Activated CD8-positive, alpha-beta memory T cell treated with anti-CD3 and anti-CD28 coated beads, Interleukin-2, amount 10 ng/mL, durations not matched to agents 7 days and 5 days (primary cell): ENCODE measurements at regions of chr9 and their contacts with region 1.

Region 1: GRCh38 chr9:89455356-89455824 is 42.5 kb downstream of the SEMA4D start:
- DNase-seq: peak; percentile 68
- ATAC-seq: peak; percentile 61
- H3K4me3 Mint-ChIP-seq: peak overlapping the region; percentile 26
- H3K27ac Mint-ChIP-seq: peak overlapping the region; percentile 87
- H3K4me1 Mint-ChIP-seq: peaks cover 87% of the 10 kb centered on the region
- H3K27me3 Mint-ChIP-seq: no peaks in the 10 kb centered on the region

Region 2: DNA sequence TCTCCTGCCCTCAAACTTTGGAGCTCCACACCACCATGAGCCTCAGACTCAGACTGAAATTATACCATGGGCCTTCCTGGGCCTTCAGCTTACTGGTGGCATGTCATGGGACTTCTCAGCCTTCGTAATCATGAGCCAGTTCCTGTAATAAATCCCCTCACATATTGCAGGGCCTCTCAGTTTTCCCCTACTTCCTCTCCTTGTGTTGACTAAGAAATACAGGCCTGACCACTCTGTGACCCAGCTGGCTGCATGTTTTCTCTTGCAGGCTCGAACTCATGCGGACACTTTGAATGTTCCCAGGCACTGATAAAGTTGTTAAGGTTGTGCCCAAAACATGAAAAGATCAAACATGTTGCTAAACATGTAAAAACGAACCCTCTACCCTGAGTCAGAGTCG is 250.6 kb before region 1 on chr9:
- CTCF ChIA-PET with region 1: no interaction called
- DNase-seq: no peak
- ATAC-seq: no peak
- H3K4me3 Mint-ChIP-seq: no peak overlapping the region
- H3K27ac Mint-ChIP-seq: no peak overlapping the region
- H3K4me1 Mint-ChIP-seq: no peaks in the 10 kb centered on the region
- H3K27me3 Mint-ChIP-seq: no peaks in the 10 kb centered on the region

Region 3: DNA sequence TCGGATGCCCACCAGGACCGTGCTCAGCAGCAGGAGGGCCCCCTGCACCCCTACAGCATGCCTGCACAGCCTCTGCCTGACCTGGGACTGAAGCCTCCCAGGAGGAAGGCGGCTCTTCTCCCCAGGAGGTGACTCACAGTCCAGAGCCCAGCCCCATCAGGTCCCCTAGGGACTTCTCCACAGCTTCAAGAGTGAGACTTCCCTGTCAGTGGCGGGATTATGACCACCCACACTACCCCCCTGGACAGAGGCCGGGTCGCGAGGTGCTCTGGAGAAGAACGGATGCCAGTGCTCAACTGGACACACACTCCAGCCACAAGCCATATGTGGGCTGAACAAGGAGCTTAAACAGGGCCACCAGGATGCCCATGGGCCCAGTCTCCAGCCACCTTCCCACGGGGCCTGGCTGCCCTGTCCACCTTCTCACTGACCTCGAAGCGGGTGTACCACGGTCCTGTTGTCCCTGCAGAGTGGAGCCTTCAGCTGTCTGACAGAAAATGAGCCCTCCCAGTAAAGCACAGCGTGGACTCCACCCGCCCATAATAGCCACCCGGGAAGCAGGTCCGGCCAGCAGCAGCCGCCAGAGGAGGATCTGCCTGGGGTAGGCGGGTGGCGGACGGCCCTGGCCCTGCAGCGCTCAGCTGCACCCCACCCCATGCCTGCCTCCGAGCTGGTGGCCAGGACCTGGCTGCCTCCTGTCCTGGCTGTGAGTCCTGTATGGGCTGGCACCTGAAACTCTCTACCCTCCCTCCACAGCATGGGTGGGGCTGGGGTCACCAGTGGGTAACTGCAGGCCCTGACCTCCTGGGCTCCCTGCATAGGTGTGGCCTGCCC is 12.2 kb before region 1 on chr9:
- CTCF ChIA-PET with region 1: interaction called, 10 read pairs
- DNase-seq: no peak
- ATAC-seq: no peak
- H3K4me3 Mint-ChIP-seq: no peak overlapping the region
- H3K27ac Mint-ChIP-seq: no peak overlapping the region
- H3K4me1 Mint-ChIP-seq: peaks cover 88% of the 10 kb centered on the region
- H3K27me3 Mint-ChIP-seq: no peaks in the 10 kb centered on the region